AG04449 (cell line): ENCODE measurements at regions of chr1 and their contacts with region 1.

Region 1: GRCh38 chr1:205227584-205228006 is at the start of gene TMCC2:
- DNase-seq: no peak
- H3K4me3 ChIP-seq: peak within 1 kb of the TSS; percentile 73
- CTCF ChIP-seq: no peak

Region 2: DNA sequence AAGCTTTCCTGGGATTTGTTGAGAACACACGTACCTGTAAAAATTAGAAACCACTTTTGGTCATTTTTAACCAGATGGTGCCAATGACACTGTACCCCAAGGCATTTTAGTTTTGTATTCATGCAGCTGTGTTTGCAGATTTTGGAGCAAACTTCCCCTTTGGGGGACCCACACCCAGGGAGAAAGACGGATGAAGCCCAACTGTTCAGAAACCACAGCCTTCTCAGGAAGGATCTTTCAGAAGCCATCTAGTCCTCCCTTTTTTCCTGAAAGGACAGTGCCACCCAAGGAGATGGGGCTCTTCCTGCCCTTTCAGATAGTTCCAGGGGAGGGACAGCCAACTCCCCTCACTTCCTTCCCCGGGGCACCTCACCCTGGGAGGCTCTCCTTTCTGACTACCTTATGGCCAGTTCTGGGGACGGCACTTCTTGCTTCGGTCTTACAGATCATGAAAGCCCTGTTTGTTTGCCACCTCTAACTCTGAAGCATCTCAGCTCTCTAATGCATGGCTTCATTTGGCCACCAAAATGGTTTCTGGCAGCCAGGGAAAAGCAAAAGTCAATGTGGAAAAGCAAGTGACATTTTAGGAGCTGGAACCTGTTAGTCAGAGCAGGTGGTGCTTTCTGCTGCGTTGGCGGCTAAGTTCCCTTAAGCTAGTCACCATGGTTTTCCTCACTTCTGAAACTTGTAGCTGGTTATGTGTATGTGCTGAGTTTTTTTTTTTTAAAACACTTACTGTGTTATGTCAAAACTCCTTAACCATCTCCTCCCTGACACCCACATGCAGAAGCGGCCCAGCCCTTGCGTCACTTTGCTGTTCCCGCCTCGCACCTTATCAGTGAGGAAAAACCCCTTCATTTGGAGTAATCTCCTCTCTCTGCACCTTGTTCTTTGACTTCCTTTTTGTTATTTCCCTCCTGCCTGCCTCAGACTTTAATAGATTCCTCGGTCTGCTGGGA is 10.2 kb after region 1 on chr1:
- CTCF ChIA-PET with region 1: interaction called, 11 read pairs
- POLR2A ChIA-PET with region 1: no interaction called
- DNase-seq: no peak
- H3K4me3 ChIP-seq: no peak overlapping the region
- CTCF ChIP-seq: no peak

Region 3: DNA sequence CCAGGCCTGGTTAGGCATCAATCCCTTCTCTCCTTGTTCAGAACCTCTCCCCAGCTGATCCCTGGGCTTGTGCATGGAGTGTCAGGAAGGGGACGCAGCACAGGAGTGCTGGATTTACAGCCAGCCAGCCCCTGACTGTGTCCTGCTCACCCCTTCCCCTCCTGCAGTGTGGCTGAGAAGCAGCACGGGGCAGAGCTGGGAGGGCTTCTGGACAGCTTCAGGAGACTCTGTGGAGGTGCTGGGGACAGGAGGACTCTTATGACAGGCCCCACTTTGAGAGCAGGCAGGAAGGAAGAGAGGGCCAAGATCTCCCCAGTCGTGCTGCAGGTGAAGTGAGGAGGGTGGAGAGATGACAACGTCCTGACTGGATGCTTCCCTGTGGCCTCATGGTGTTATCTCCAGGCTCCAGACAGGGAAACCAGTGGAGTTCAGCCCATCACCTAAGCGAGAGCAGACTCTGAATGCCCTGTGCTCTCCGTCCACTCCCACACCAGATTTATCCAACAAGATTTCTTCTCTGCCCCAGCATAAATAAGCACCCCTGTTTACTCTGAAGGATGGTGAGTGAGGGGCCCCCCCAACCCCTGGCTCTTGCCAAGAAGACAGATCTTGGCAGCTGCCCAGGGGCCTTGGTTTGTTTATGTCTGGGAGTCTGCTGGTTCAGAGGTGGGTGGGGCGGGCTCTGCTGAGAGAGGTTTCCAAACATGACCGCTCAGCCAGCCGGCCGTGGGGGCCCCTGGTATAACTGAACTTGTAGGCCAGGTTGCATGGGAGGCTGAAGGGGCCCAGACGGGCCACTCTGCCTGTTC is 21.4 kb after region 1 on chr1:
- CTCF ChIA-PET with region 1: interaction called, 37 read pairs
- POLR2A ChIA-PET with region 1: interaction called, 4 read pairs
- DNase-seq: no peak
- H3K4me3 ChIP-seq: no peak overlapping the region
- CTCF ChIP-seq: no peak

Region 4: GRCh38 chr1:205321164-205321958 is 93.8 kb after region 1 on chr1 and contains the start of gene NUAK2:
- CTCF ChIA-PET with region 1: interaction called, 20 read pairs
- POLR2A ChIA-PET with region 1: no interaction called
- DNase-seq: no peak
- H3K4me3 ChIP-seq: peak within 1 kb of the TSS; percentile 98
- CTCF ChIP-seq: peak; percentile 48